Activated CD8-positive, alpha-beta T cell treated with anti-CD3 and anti-CD28 coated beads for 36 hours (primary cell): ENCODE measurements at regions of chr12 and their contacts with region 1.

Region 1: GRCh38 chr12:64273527-64274403 is 51.7 kb upstream of the KICS2 start:
- DNase-seq: peak; percentile 34
- ATAC-seq: peak; percentile 70
- H3K4me3 Mint-ChIP-seq: no peak overlapping the region
- H3K27ac Mint-ChIP-seq: no peak overlapping the region
- H3K4me1 Mint-ChIP-seq: no peaks in the 10 kb centered on the region
- H3K27me3 Mint-ChIP-seq: peaks cover 3% of the 10 kb centered on the region
- CTCF ChIP-seq: peak; percentile 34

Region 2: GRCh38 chr12:64373193-64373592 is 99.4 kb after region 1 on chr12:
- CTCF ChIA-PET with region 1: no interaction called
- POLR2A ChIA-PET with region 1: no interaction called
- intact Hi-C with region 1: no loop called
- DNase-seq: no peak
- ATAC-seq: no peak
- H3K4me3 Mint-ChIP-seq: no peak overlapping the region
- H3K27ac Mint-ChIP-seq: no peak overlapping the region
- H3K4me1 Mint-ChIP-seq: peaks cover 2% of the 10 kb centered on the region
- H3K27me3 Mint-ChIP-seq: no peaks in the 10 kb centered on the region
- CTCF ChIP-seq: no peak

Region 3: GRCh38 chr12:64392221-64392620 is 118.5 kb after region 1 on chr12:
- CTCF ChIA-PET with region 1: no interaction called
- POLR2A ChIA-PET with region 1: interaction called, 3 read pairs
- intact Hi-C with region 1: loop called (anchors 10 kb)
- DNase-seq: peak; percentile 39
- ATAC-seq: peak; percentile 40
- H3K4me3 Mint-ChIP-seq: no peak overlapping the region
- H3K27ac Mint-ChIP-seq: no peak overlapping the region
- H3K4me1 Mint-ChIP-seq: peaks cover 5% of the 10 kb centered on the region
- H3K27me3 Mint-ChIP-seq: peaks cover 11% of the 10 kb centered on the region
- CTCF ChIP-seq: peak; percentile 35

Region 4: GRCh38 chr12:64450057-64450640 is 176.4 kb after region 1 on chr12:
- CTCF ChIA-PET with region 1: no interaction called
- POLR2A ChIA-PET with region 1: no interaction called
- intact Hi-C with region 1: no loop called
- DNase-seq: peak; percentile 9
- ATAC-seq: no peak
- H3K4me3 Mint-ChIP-seq: peak overlapping the region; percentile 93
- H3K27ac Mint-ChIP-seq: peak overlapping the region; percentile 7
- H3K4me1 Mint-ChIP-seq: peaks cover 26% of the 10 kb centered on the region
- H3K27me3 Mint-ChIP-seq: no peaks in the 10 kb centered on the region
- CTCF ChIP-seq: no peak